ENCODE measurements at regions of chr15 and their contacts with region 1.

Region 1: DNA sequence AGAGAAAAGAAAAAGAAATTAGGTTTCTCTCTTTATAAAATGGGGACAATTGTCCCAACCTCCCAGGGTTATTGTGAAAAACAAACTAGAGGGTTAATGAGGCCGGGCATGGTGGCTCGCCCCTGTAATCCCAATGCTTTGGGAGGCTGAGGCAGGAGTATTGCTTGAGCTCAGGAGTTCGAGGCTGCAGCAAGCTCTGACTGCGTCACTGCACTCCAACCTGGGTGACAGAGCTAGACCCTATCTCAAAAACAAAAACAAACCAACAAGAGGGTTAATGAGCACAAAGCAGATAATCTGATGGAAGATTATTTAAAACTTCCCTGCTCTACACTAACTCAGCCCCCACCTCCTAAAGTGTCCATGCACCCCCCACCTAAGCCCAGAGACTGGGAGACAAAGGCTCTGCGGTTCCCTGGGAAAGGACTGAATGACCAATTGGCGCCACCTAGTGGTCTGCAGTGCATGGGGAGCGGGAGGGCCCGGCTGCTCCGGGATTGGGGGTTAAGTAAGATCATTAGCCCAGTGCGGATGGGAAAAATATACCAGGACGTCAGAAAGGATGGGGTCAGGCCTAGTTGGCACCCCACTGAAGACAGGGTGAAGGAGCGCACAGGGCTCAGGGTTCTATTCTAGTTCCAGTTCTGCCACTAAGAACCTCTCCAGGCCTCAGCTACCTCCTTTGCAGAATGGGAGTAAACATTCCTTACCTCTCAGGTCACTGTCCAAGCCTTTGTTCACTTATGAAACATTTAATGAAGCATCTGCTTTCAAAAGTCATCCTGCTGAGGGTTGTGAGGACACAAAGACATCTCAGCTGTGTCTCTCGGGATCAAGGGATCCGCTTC is 15.6 kb downstream of the PIF1 start:
- DNase-seq: peak; percentile 91
- H3K4me3 ChIP-seq: peak overlapping the region in 1 of 2 experiments; percentile 20; a peak in 1 of 4 replicates
- H3K27ac ChIP-seq: no peak overlapping the region
- H3K4me1 ChIP-seq: peaks cover 0 to 14% of the 10 kb centered on the region in 2 experiments; a peak in 2 of 4 replicates
- H3K27me3 ChIP-seq: no peaks in the 10 kb centered on the region
- CTCF ChIP-seq: peak; percentile 98
- EP300 ChIP-seq: no peak
- RAD21 ChIP-seq: peak; percentile 94

Region 2: DNA sequence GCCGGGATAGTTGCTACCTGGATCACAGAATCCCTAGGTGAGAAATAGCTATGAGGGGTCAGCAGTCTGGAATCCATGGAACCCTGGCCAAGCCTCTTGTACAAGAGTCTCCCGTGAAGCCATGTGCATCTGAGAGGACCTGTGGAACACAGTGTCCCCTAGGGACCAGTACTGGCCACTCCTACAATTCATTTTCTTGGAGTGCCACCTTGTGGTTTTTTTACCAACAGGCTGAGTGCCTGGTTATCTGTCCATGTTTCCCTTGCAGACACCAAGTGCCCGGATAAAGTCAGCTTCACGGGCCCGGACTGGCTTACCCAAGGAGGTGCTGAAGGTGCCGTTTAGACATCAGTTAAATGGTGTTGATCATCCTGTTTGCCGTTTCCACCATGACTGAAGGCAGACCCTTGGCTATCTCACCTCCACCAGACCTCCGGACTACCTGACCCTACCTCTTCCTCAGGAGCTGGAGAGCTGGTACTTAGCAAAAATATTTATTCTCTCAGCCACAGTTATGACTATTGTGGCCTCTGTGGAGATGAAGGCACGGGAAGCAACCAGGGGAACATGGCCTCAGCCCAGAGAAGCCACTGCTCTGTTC is 128.3 kb before region 1 on chr15:
- CTCF ChIA-PET with region 1: interaction called, 42 read pairs
- POLR2A ChIA-PET with region 1: no interaction called
- DNase-seq: peak; percentile 89
- H3K4me3 ChIP-seq: no peak overlapping the region
- H3K27ac ChIP-seq: no peak overlapping the region; a peak in 1 of 4 replicates
- H3K4me1 ChIP-seq: no peaks in the 10 kb centered on the region
- H3K27me3 ChIP-seq: no peaks in the 10 kb centered on the region
- CTCF ChIP-seq: peak; percentile 74
- EP300 ChIP-seq: no peak
- RAD21 ChIP-seq: peak; percentile 98

Region 3: DNA sequence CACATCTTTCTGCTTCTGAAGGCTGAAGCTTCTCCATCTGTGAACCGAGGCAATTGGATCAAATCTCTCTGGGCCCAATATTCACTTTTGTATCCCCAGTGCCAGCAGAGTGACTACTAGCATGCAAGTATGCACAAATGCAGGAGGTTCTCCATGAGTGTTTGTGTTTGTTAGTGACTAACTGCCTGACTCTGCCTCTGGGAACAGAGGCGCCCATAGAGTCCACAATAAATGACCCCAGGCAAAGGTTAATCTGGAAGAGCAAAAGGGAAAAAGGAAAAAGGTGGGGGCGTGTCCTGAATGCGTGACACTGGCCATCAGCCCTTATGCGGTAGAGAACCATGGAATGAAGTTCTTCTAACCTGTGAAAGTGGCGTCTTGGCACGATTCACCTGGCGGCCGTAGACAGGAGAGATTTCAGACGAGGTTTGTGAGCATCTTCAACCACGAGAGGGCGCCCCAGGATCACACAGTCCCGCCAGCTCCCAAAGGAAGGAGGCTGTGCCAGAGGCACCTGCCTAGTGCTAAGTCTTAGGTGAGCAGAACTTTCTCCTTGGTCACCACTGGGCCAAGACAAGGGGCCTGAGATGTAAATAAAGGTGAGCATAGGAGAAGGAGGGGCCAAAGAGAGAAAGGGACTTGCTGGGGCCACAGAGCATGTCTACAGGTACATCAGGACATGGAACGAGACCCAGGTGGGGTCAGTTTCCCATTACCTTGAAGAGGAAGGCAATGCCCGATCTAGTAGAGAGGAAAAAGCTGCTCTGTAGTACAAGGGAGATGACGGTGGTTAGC is 78.7 kb before region 1 on chr15:
- CTCF ChIA-PET with region 1: interaction called, 286 read pairs
- POLR2A ChIA-PET with region 1: interaction called, 5 read pairs
- DNase-seq: peak; percentile 81
- H3K4me3 ChIP-seq: no peak overlapping the region
- H3K27ac ChIP-seq: no peak overlapping the region
- H3K4me1 ChIP-seq: peaks cover 0 to 7% of the 10 kb centered on the region in 2 experiments; a peak in 1 of 4 replicates
- H3K27me3 ChIP-seq: no peaks in the 10 kb centered on the region
- CTCF ChIP-seq: peak; percentile 88
- EP300 ChIP-seq: no peak
- RAD21 ChIP-seq: peak; percentile 97

Region 4: DNA sequence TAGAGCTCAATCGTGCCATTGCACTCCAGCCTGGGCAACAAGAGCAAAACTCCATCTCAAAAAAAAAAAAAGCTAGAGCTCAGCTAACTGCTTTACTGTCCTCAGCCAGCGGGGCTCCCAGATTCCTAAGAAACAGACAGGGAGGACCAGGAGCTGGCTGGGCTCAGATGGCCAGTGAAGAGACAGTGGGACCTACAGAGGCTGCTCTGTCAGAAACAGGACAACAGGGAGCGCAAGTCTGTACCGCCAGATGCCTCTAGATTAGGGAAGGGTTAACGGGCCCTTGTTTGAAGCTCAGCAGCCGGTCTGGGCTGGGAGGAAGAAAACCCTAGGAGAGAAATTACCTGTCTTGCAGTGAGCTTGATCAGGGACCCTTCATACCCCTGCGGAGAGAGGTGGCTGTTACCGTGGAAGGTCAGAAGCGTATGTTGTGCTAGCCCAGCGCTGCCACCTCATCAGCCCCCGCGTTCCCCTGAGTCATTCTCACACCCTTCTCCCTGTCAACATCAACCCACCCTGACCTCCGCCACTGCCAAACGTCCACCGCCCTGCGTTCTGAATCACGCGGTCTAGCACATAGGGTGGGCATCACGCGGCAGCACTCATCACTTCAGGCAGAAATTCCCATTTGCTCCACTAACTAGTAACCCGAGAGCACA is 59.7 kb before region 1 on chr15:
- CTCF ChIA-PET with region 1: interaction called, 54 read pairs
- POLR2A ChIA-PET with region 1: no interaction called
- DNase-seq: peak; percentile 70
- H3K4me3 ChIP-seq: no peak overlapping the region
- H3K27ac ChIP-seq: 0 out of 4 replicates have a peak overlapping the region, but pooled peaks of 1 of the 2 experiments have one; percentile 7
- H3K4me1 ChIP-seq: peaks cover 0 to 3% of the 10 kb centered on the region in 2 experiments; a peak in 1 of 4 replicates
- H3K27me3 ChIP-seq: no peaks in the 10 kb centered on the region
- CTCF ChIP-seq: peak; percentile 24; the same call in 1 of the 2 replicates
- EP300 ChIP-seq: no peak
- RAD21 ChIP-seq: peak; percentile 43

Region 5: GRCh38 chr15:64783796-64784195 is 26.1 kb before region 1 on chr15:
- CTCF ChIA-PET with region 1: interaction called, 21 read pairs
- POLR2A ChIA-PET with region 1: no interaction called
- DNase-seq: no peak
- H3K4me3 ChIP-seq: no peak overlapping the region
- H3K27ac ChIP-seq: no peak overlapping the region
- H3K4me1 ChIP-seq: no peaks in the 10 kb centered on the region
- H3K27me3 ChIP-seq: no peaks in the 10 kb centered on the region
- CTCF ChIP-seq: no peak
- EP300 ChIP-seq: no peak
- RAD21 ChIP-seq: no peak

Region 6: GRCh38 chr15:64825431-64826294 is 15.8 kb after region 1 on chr15 and contains the start of gene PIF1:
- CTCF ChIA-PET with region 1: interaction called, 49 read pairs
- POLR2A ChIA-PET with region 1: interaction called, 6 read pairs
- DNase-seq: peak; percentile 94
- H3K4me3 ChIP-seq: peak within 1 kb of the TSS; percentile 63 to 75
- H3K27ac ChIP-seq: peak within 1 kb of the TSS; percentile 59 to 91
- H3K4me1 ChIP-seq: peaks cover 0 to 16% of the 10 kb centered on the region in 2 experiments; a peak in 1 of 4 replicates
- H3K27me3 ChIP-seq: no peaks in the 10 kb centered on the region
- CTCF ChIP-seq: no peak
- EP300 ChIP-seq: peak in 1 of 2 experiments; percentile 51; a peak in 1 of 4 replicates
- RAD21 ChIP-seq: peak; percentile 20; the same call in 1 of the 2 replicates
- polyA plus RNA-seq, gene PIF1: 12.1 and 12.4 TPM in 2 replicates